Caco-2 (cell line): ENCODE measurements at regions of chr1 and their contacts with region 1.

Region 1: DNA sequence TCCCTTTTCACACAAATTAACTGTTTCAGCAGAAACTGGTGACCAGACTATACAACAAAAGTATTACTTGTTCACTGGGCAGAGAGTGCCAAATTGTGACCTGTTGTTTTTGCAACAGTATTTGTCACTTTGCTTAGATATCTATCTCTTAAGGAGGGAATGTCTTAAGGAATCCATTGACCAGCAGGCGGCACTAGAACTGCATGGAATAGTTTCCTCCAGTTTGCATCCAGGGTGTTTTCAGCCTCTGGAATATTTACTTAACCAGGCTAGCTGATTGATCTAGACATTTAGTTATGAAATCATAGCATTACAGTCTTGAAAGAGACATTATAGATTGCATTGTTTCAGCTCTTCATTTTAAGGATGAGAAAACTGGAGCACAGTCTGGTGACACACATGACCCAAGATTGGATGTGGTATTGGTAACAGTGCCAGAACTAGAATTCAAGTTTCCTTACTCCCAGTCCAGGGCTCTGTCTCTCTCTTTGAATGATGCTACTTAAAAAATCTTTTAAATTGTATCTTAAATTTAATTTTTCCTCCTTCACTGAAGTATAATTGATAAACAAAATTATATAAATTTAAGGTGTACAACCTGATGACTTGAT is 16.9 kb downstream of the RPTN start:
- DNase-seq: peak; percentile 61 to 70
- H3K4me3 ChIP-seq: no peak overlapping the region
- H3K4me3 Mint-ChIP-seq: no peak overlapping the region
- H3K27ac Mint-ChIP-seq: no peak overlapping the region
- H3K4me1 ChIP-seq: no peaks in the 10 kb centered on the region
- H3K4me1 Mint-ChIP-seq: no peaks in the 10 kb centered on the region
- H3K27me3 ChIP-seq: no peaks in the 10 kb centered on the region
- H3K27me3 Mint-ChIP-seq: peaks cover 5% of the 10 kb centered on the region
- CTCF ChIP-seq: peak; percentile 81 to 89

Region 2: GRCh38 chr1:152162806-152163463 is 20.9 kb after region 1 on chr1:
- CTCF ChIA-PET with region 1: no interaction called
- POLR2A ChIA-PET with region 1: no interaction called
- intact Hi-C with region 1: loop called (anchors 1 kb)
- DNase-seq: peak in 1 of 2 experiments; percentile 66
- H3K4me3 ChIP-seq: no peak overlapping the region
- H3K4me3 Mint-ChIP-seq: no peak overlapping the region
- H3K27ac Mint-ChIP-seq: no peak overlapping the region
- H3K4me1 ChIP-seq: peaks cover 38% of the 10 kb centered on the region
- H3K4me1 Mint-ChIP-seq: peaks cover 41% of the 10 kb centered on the region
- H3K27me3 ChIP-seq: no peaks in the 10 kb centered on the region
- H3K27me3 Mint-ChIP-seq: no peaks in the 10 kb centered on the region
- CTCF ChIP-seq: peak in 1 of 2 experiments; percentile 15

Region 3: GRCh38 chr1:152182431-152182830 is 40.4 kb after region 1 on chr1:
- CTCF ChIA-PET with region 1: interaction called, 15 read pairs
- POLR2A ChIA-PET with region 1: no interaction called
- intact Hi-C with region 1: loop called (anchors 1 kb)
- DNase-seq: peak in 1 of 2 experiments; percentile 14
- H3K4me3 ChIP-seq: no peak overlapping the region
- H3K4me3 Mint-ChIP-seq: no peak overlapping the region
- H3K27ac Mint-ChIP-seq: no peak overlapping the region
- H3K4me1 ChIP-seq: no peaks in the 10 kb centered on the region
- H3K4me1 Mint-ChIP-seq: no peaks in the 10 kb centered on the region
- H3K27me3 ChIP-seq: no peaks in the 10 kb centered on the region
- H3K27me3 Mint-ChIP-seq: no peaks in the 10 kb centered on the region
- CTCF ChIP-seq: peak; percentile 34 to 38

Region 4: GRCh38 chr1:152347116-152347728 is 205.1 kb after region 1 on chr1:
- CTCF ChIA-PET with region 1: no interaction called
- POLR2A ChIA-PET with region 1: no interaction called
- intact Hi-C with region 1: loop called (anchors 5 kb)
- DNase-seq: peak; percentile 42 to 72
- H3K4me3 ChIP-seq: no peak overlapping the region
- H3K4me3 Mint-ChIP-seq: no peak overlapping the region
- H3K27ac Mint-ChIP-seq: no peak overlapping the region
- H3K4me1 ChIP-seq: no peaks in the 10 kb centered on the region
- H3K4me1 Mint-ChIP-seq: no peaks in the 10 kb centered on the region
- H3K27me3 ChIP-seq: no peaks in the 10 kb centered on the region
- H3K27me3 Mint-ChIP-seq: peaks cover 5% of the 10 kb centered on the region
- CTCF ChIP-seq: peak; percentile 79 to 82